ENCODE measurements at regions of chr14 and their contacts with region 1.

Region 1: DNA sequence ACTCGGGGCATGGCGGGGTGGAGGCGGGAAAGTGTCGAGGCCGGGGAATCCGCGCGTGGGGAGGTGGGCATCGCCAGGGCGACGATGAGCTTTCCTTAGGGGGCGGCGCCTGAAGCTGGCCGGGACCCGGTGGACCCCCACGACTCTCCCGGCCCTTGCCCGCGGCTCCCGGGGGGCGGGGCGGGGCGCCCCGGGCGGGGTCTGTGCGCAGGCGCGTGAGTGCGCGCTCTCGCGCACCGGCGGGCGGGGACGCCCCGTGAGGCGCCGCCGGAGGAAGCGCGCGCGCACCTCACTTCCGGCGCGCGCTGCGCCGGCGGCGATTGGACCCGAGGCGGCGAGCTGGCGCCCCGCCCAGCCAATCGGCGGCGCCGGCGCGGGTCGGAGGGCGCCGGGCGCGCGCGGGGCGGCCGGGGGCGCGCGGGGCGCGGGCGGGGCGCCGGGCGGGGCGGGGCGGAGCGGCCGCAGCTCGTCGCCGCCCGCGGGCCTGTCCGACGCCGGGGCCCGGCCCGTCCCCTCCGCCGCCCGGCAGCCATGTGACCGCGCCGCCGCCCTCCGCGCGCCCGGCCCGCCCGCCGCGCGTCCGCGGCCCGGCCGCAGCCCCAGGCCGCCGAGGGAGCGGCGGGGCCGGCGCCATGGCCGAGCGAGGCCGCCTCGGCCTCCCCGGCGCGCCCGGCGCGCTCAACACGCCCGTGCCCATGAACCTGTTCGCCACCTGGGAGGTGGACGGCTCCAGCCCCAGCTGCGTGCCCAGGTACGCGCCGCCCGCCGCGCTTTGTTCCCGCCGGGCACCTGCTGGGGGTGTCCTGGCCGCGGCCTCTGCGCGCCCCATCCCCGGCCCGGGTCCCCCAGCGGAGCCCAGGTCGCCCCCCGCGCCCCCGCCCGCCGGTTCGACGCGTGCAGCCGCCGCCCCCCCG is at the start of gene PACS2:
- DNase-seq: peak; percentile 69
- H3K4me3 ChIP-seq: peak within 1 kb of the TSS; percentile 65
- H3K27ac ChIP-seq: peak within 1 kb of the TSS; percentile 60
- H3K4me1 ChIP-seq: peaks cover 6% of the 10 kb centered on the region
- H3K27me3 ChIP-seq: no peaks in the 10 kb centered on the region
- CTCF ChIP-seq: no peak
- total RNA-seq, gene PACS2: 44.1 to 82.5 TPM

Region 2: GRCh38 chr14:105248368-105248756 is 66.2 kb before region 1 on chr14 and contains the start of gene BTBD6:
- intact Hi-C with region 1: loop called (anchors 5 kb)
- DNase-seq: peak; percentile 87
- H3K4me3 ChIP-seq: peak within 1 kb of the TSS; percentile 54
- H3K27ac ChIP-seq: peak within 1 kb of the TSS; percentile 63
- H3K4me1 ChIP-seq: peaks cover 11% of the 10 kb centered on the region
- H3K27me3 ChIP-seq: no peaks in the 10 kb centered on the region
- CTCF ChIP-seq: no peak
- total RNA-seq, gene BTBD6: 56.9 to 66.0 TPM